H1 (cell line): ENCODE measurements at regions of chr4 and their contacts with region 1.

Region 1: GRCh38 chr4:17347445-17347844 is 164.4 kb downstream of the QDPR start:
- DNase-seq: peak in 1 of 2 experiments; percentile 55
- H3K4me3 ChIP-seq: no peak overlapping the region
- H3K27ac ChIP-seq: no peak overlapping the region
- H3K4me1 ChIP-seq: no peaks in the 10 kb centered on the region; a peak in 1 of 7 replicates
- H3K27me3 ChIP-seq: no peaks in the 10 kb centered on the region
- CTCF ChIP-seq: peak; percentile 38 to 65 (median 62)
- EP300 ChIP-seq: no peak
- POLR2A ChIP-seq: no peak
- RAD21 ChIP-seq: peak; percentile 76 to 82

Region 2: GRCh38 chr4:17232566-17233253 is 114.7 kb before region 1 on chr4:
- CTCF ChIA-PET with region 1: no interaction called
- POLR2A ChIA-PET with region 1: no interaction called
- DNase-seq: no peak
- H3K4me3 ChIP-seq: no peak overlapping the region
- H3K27ac ChIP-seq: no peak overlapping the region
- H3K4me1 ChIP-seq: peaks cover 0 to 7% (median 0%) of the 10 kb centered on the region in 4 experiments; a peak in 1 of 7 replicates
- H3K27me3 ChIP-seq: no peaks in the 10 kb centered on the region
- CTCF ChIP-seq: no peak
- EP300 ChIP-seq: no peak
- POLR2A ChIP-seq: no peak
- RAD21 ChIP-seq: no peak

Region 3: DNA sequence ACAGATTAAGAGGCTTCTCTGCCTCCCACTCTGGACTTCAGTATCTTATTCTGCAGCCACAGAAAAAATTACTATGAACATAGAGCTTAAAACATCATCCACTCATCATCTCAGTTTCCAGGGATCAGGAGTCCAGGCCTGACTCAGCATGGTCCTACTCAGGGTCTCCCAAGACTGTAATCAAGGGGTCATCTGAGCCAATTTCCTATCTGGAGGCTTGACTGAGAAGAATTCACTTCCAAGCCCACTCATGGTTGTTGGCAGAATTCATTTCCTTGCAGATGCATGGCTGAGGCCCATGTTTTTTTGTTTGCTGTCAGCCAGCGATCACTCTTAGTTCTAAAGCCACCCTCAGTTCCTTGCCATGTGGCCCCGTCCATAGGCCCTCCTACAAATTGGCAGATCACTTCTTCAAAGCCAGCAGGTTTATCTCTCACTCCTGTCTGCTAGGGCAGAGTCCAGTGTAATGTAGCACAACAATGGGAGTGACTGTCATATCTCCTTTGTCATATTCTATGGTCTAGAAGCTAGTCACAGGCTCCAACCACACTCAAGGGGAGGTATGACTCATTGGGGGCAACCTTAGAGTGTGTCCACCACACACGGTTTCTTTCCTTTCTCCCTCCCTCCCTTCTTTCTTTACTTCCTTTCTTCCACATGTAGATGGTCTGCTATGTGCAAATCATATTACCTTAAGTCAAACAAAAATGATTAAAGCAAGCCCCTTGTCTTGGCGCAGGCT is 87.1 kb before region 1 on chr4:
- CTCF ChIA-PET with region 1: no interaction called
- POLR2A ChIA-PET with region 1: no interaction called
- DNase-seq: no peak
- H3K4me3 ChIP-seq: no peak overlapping the region
- H3K27ac ChIP-seq: no peak overlapping the region
- H3K4me1 ChIP-seq: no peaks in the 10 kb centered on the region
- H3K27me3 ChIP-seq: no peaks in the 10 kb centered on the region
- CTCF ChIP-seq: no peak
- EP300 ChIP-seq: no peak
- POLR2A ChIP-seq: no peak
- RAD21 ChIP-seq: no peak

Region 4: GRCh38 chr4:17336524-17336961 is 10.9 kb before region 1 on chr4:
- CTCF ChIA-PET with region 1: interaction called, 14 read pairs
- POLR2A ChIA-PET with region 1: no interaction called
- DNase-seq: no peak
- H3K4me3 ChIP-seq: no peak overlapping the region
- H3K27ac ChIP-seq: no peak overlapping the region
- H3K4me1 ChIP-seq: peaks cover 0 to 2% (median 0%) of the 10 kb centered on the region in 4 experiments; a peak in 1 of 7 replicates
- H3K27me3 ChIP-seq: no peaks in the 10 kb centered on the region
- CTCF ChIP-seq: no peak
- EP300 ChIP-seq: no peak
- POLR2A ChIP-seq: no peak
- RAD21 ChIP-seq: no peak

Region 5: DNA sequence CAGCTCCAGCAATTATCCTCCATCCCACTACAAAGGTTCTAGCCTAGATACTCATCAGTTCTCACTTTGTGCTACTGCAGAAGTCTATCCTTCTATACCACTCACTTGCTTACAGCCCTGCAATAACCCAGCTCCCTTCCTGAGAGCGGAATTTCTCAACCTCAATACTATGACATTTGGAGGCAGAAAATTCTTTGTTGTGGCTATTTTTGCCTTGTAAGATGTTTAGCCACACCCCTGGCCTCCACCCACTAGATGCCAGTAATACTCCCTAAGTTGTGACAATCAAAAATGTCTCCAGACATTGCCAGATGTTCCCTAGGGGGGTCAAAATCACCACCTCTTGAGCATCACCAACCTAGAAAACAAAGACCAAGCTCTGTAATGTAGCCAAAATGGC is 15.0 kb after region 1 on chr4:
- CTCF ChIA-PET with region 1: interaction called, 13 read pairs
- POLR2A ChIA-PET with region 1: no interaction called
- DNase-seq: no peak
- H3K4me3 ChIP-seq: no peak overlapping the region
- H3K27ac ChIP-seq: no peak overlapping the region
- H3K4me1 ChIP-seq: no peaks in the 10 kb centered on the region
- H3K27me3 ChIP-seq: no peaks in the 10 kb centered on the region
- CTCF ChIP-seq: no peak
- EP300 ChIP-seq: no peak
- POLR2A ChIP-seq: no peak
- RAD21 ChIP-seq: no peak